ENCODE measurements at regions of chr9 and their contacts with region 1.

Region 1: DNA sequence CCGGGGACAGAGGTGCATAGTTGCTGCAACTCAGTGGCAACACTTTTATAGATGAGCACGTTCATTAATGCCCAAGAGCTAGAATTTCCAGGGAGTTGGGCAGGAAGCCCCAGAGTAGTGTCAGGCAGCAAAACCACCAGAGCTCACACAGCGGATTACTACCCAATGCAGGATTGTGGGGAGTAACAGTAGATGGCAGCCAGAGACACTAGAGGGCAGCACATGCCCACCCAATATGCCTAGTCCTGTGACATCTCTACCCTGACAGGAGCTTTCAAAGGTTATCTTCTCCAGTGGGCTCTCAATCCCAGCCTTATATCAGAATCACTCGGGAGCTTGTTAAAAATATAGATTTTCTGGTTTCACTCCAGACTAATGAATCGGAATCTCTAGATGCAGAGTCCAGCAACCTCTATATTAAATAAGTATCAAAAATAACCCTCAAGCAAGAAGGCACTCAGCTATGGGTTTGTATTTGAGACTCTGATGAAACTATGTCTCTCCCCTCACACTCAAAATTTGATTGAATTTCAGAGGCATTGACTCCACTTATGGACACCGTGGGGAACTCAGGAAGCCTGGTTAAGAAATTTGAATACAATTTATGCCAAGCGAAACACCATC is 58.4 kb upstream of the PHF24 start:
- DNase-seq: peak; percentile 70 to 81 (median 76)
- ATAC-seq: peak; percentile 100
- H3K4me3 ChIP-seq: no peak overlapping the region
- H3K27ac ChIP-seq: no peak overlapping the region
- H3K4me1 ChIP-seq: no peaks in the 10 kb centered on the region
- H3K27me3 ChIP-seq: no peaks in the 10 kb centered on the region
- CTCF ChIP-seq: peak; percentile 83 to 88 (median 86)
- POLR2A ChIP-seq: no peak

Region 2: DNA sequence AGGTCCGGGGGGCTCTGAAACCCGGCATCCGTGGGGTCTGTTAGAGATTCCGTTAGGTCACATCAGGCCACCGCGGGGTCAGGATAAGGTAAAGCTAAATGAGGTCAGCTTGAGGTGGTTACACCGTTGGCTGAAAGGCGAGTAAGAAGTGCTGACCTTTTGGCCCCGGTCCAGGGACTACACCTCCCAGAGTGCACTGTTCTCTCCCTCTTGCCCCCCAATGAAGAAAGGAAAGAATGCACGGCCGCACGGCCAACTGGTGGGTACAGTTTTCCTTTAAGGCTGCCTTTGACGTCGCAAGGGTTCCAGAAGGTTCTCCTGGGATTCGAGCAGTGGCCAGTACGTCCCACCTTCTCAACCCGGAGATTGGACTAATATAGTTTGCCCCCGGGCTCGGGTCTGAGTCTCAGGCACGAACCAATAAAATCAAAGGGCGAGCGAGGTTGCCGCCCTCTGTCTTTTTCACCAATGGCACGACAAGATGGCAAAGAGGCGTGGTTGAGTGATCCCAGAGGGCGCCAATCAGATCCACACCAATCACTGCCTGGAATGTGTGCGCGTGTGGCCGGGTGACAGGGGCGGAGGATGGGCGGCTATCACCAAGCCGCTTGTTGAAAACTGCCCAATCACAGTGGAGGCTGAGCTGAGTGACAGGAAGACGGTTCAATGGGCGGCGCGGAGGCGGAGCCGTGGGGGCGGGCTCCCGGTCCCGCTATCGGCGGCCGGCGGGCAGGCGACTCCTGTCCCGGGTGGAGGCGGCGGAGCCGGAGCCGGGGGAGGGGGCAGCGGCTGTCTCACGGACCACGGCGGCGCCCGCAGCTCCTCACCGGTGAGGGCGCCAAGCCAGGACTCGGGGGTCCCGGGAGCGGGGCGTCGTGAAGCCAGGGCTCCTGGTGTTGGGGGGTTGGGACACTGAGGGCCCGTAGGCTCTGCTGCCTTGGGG is 89.6 kb after region 1 on chr9 and contains the start of gene DNAJB5:
- intact Hi-C with region 1: loop called in 1 of 2 experiments (anchors 10 kb)
- DNase-seq: peak; percentile 97 to 99 (median 99)
- ATAC-seq: peak; percentile 83 to 96 (median 94)
- H3K4me3 ChIP-seq: peak within 1 kb of the TSS; percentile 75 to 88 (median 83)
- H3K27ac ChIP-seq: peak within 1 kb of the TSS; percentile 74 to 84 (median 84)
- H3K4me1 ChIP-seq: peaks cover 0 to 5% (median 0%) of the 10 kb centered on the region in 4 donors
- H3K27me3 ChIP-seq: no peaks in the 10 kb centered on the region
- CTCF ChIP-seq: no peak
- POLR2A ChIP-seq: peak; percentile 83
- total RNA-seq, gene DNAJB5: 1.1 to 3.5 (median 1.7) TPM

Measured in right lobe of liver (tissue), 6 donors.